ENCODE measurements at regions of chr14 and their contacts with region 1.

Region 1: DNA sequence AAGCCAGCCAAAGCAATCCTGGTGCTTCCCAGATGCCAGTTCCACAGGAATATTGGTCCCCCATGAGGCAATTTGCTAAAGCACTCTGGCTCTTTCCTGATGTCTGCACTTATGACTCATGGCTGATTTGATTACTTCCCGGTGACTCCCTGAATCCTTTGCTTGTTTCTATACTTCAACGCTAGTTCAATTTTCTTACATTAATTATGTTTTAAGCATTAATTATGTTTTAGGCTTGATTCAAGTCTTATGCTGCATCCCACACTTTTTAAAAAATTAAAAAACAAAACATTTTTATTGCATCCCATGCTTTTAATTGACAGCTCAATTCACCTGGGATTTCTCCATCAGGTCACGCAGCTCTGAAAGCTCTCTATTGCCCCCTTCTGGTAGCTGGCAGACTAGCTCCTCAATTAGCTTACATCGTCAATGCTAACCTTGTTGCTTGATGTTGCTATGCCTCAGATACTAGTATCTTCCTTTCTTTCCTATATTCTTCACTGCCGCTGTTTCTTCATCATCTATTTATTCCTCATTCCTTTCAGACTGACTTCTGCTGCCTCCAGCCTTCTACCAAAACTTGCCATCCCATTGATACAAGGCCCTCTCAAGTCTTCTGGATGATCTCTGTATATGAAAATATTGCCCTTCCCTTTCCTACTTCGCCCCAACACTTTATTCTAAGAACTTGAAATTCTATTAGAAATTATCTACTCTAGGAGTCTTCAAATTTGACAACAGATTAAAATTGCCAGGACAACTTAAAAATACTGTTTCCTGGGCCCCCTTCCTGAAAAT is 32.0 kb downstream of the TSHR start:
- DNase-seq: peak; percentile 51 to 77
- H3K4me3 ChIP-seq: no peak overlapping the region
- H3K27ac ChIP-seq: no peak overlapping the region
- H3K4me1 ChIP-seq: no peaks in the 10 kb centered on the region
- H3K27me3 ChIP-seq: no peaks in the 10 kb centered on the region
- CTCF ChIP-seq: peak; percentile 28 to 87 (median 80)
- EP300 ChIP-seq: no peak
- POLR2A ChIP-seq: no peak
- RAD21 ChIP-seq: peak; percentile 82 to 86

Region 2: GRCh38 chr14:80798878-80799277 is 188.6 kb before region 1 on chr14:
- CTCF ChIA-PET with region 1: no interaction called
- POLR2A ChIA-PET with region 1: no interaction called
- DNase-seq: no peak
- H3K4me3 ChIP-seq: no peak overlapping the region
- H3K27ac ChIP-seq: no peak overlapping the region
- H3K4me1 ChIP-seq: no peaks in the 10 kb centered on the region
- H3K27me3 ChIP-seq: no peaks in the 10 kb centered on the region
- CTCF ChIP-seq: no peak
- EP300 ChIP-seq: no peak
- POLR2A ChIP-seq: no peak
- RAD21 ChIP-seq: no peak

Region 3: GRCh38 chr14:80954687-80955299 is 32.6 kb before region 1 on chr14:
- CTCF ChIA-PET with region 1: interaction called, 64 read pairs
- POLR2A ChIA-PET with region 1: no interaction called
- DNase-seq: peak; percentile 38 to 89
- H3K4me3 ChIP-seq: peak overlapping the region; percentile 18 to 77 (median 64); a peak in 7 of 8 replicates
- H3K27ac ChIP-seq: no peak overlapping the region
- H3K4me1 ChIP-seq: peaks cover 0 to 6% (median under 1%) of the 10 kb centered on the region in 4 experiments; a peak in 2 of 7 replicates
- H3K27me3 ChIP-seq: peaks cover 2 to 9% (median 6%) of the 10 kb centered on the region in 4 experiments; a peak in 5 of 7 replicates
- CTCF ChIP-seq: peak; percentile 53 to 84 (median 69)
- EP300 ChIP-seq: no peak
- POLR2A ChIP-seq: no peak
- RAD21 ChIP-seq: peak; percentile 85 to 93

Region 4: DNA sequence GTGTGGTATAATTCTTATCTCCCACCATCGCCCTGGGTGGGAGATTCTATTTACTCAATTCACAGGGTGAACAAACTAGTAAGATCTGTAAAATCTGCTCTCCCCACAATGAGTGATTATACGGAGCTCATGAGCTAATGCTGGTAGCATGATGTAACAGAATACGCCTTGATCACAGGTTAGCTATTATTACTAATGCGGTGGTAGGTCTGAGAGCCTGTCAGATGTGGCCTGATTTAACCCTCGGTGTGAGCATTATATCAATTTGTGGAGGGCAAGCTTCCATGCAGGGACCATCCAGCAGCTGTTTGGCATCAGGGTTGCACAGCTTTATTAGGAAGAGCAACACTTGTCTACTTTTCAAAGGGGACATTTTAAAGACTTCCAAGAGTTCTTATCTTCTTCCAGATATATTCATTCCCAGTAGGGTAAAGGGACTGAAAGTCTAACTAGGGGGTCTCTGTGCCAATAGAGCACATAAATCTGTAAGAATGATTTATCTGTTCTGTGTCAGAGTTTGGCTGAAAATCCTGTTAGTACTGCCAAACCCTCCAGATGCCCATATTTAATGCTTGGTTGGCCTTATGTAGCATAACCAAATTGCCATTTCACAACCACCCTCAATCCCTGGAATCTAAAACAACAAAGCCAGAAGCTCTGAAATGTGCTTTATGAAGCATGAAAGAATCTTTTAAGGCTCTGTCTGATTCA is 13.3 kb before region 1 on chr14:
- CTCF ChIA-PET with region 1: interaction called, 104 read pairs
- POLR2A ChIA-PET with region 1: no interaction called
- DNase-seq: no peak
- H3K4me3 ChIP-seq: no peak overlapping the region
- H3K27ac ChIP-seq: no peak overlapping the region
- H3K4me1 ChIP-seq: no peaks in the 10 kb centered on the region
- H3K27me3 ChIP-seq: no peaks in the 10 kb centered on the region
- CTCF ChIP-seq: no peak
- EP300 ChIP-seq: no peak
- POLR2A ChIP-seq: no peak
- RAD21 ChIP-seq: no peak

Region 5: DNA sequence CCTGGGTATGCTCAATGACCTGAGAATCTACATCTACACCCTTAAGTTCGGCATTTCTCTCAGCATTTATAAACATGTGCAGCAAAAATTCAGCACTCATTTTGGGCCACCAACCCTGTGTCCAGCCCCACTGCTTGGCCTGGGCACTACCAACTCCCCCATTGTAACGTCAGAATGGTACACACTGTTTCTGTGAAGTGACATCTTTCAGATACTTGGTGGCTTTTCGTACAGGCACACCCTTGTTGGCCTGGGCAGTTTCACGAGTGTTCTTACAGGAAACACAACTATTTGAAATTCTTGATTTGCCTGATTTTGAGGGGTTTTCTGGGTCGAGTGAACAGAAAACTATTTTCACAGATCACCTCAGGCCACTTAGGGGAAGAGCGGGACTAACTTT is 14.0 kb after region 1 on chr14:
- CTCF ChIA-PET with region 1: interaction called, 32 read pairs
- POLR2A ChIA-PET with region 1: no interaction called
- DNase-seq: no peak
- H3K4me3 ChIP-seq: no peak overlapping the region
- H3K27ac ChIP-seq: no peak overlapping the region
- H3K4me1 ChIP-seq: no peaks in the 10 kb centered on the region
- H3K27me3 ChIP-seq: no peaks in the 10 kb centered on the region
- CTCF ChIP-seq: no peak
- EP300 ChIP-seq: no peak
- POLR2A ChIP-seq: no peak
- RAD21 ChIP-seq: no peak

Region 6: DNA sequence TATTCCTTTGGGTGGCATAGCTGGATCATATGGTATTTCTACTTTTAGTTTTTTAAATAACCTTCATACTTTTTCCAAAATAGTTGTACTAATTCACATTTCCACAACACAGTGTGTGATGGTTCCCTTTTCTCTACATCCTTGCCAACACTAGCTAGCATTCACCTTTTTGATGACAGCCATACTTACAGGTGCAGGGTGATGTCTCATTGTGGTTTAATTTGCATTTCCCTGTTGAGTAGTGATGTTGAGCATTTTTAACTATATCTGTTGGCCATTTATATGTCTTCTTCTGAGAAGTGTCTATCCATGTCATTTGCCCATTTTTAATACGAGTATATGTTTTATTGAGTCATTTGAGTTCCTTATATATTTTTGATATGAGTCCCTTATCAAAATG is 64.1 kb after region 1 on chr14:
- CTCF ChIA-PET with region 1: no interaction called
- POLR2A ChIA-PET with region 1: no interaction called
- DNase-seq: no peak
- H3K4me3 ChIP-seq: no peak overlapping the region
- H3K27ac ChIP-seq: no peak overlapping the region
- H3K4me1 ChIP-seq: no peaks in the 10 kb centered on the region
- H3K27me3 ChIP-seq: no peaks in the 10 kb centered on the region
- CTCF ChIP-seq: no peak
- EP300 ChIP-seq: no peak
- POLR2A ChIP-seq: no peak
- RAD21 ChIP-seq: no peak

Region 7: GRCh38 chr14:81070511-81070910 is 83.1 kb after region 1 on chr14:
- CTCF ChIA-PET with region 1: no interaction called
- POLR2A ChIA-PET with region 1: no interaction called
- DNase-seq: no peak
- H3K4me3 ChIP-seq: no peak overlapping the region
- H3K27ac ChIP-seq: no peak overlapping the region
- H3K4me1 ChIP-seq: no peaks in the 10 kb centered on the region
- H3K27me3 ChIP-seq: no peaks in the 10 kb centered on the region
- CTCF ChIP-seq: no peak
- EP300 ChIP-seq: no peak
- POLR2A ChIP-seq: no peak
- RAD21 ChIP-seq: no peak

Region 8: DNA sequence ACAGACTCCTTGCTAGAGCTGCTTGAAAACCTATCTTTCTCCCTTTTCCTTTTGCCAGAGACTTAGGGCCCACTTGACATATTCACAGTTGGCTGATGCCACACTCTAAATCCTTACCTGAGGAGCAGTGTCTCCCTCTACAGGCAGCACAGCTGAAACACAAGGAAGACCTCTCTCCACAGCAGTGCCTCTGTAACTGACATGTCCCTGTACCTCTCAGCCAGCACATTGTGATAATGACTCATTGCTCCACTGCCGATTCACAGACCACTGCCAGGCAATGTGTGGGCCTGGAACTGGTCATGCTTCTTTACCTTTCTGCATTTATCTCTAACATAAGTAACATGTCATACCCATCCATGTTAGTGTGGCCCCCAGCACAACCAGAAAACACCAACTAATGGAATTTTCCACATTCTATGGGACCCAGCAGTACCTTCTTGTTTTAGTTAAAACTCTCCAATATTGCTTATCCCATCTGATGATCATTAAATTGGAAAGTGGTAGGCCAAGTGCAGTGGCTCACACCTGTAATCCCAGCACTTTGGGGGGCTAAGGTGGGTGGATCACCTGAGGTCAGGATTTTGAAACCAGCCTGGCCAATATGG is 176.8 kb after region 1 on chr14:
- CTCF ChIA-PET with region 1: interaction called, 14 read pairs
- POLR2A ChIA-PET with region 1: no interaction called
- DNase-seq: peak; percentile 63 to 77
- H3K4me3 ChIP-seq: no peak overlapping the region
- H3K27ac ChIP-seq: no peak overlapping the region
- H3K4me1 ChIP-seq: peaks cover 0 to 2% (median 0%) of the 10 kb centered on the region in 4 experiments; a peak in 1 of 7 replicates
- H3K27me3 ChIP-seq: no peaks in the 10 kb centered on the region
- CTCF ChIP-seq: peak; percentile 71 to 99 (median 92)
- EP300 ChIP-seq: no peak
- POLR2A ChIP-seq: no peak
- RAD21 ChIP-seq: peak; percentile 88 to 92

Region 9: DNA sequence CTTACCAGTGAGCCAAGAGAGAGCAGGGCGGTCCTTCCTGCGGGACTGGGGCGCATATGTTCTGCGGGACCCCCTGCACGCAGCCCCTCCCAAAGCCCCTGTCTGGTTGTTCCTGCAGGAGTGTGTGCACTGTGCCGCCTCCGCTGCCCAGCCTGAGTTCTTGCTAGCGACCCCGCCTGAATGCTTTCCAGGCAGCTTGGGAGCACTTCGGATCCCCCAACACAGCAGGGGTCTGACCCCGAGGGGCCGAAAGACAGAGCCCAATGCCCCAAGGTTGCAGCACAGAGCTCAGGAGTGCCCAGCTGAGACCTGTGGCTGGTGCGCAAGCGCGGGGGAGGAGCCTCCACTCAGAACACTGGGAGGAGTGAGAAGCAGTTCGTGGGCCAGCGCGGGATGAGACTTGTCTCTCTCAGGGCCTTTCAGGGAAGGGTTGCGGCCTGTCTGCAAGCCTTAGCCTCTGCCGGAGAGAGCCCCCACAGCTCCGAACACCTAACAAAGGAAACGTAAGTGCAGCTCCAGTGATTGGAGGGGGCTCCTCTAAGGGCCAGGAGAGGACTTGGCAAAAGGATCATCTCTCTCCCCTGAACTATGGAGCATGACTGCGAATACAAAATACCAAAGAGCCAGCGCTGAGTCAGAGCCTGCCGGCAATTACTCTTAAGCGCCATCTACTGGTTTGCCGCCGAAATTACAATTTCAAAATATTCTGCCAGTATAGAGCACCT is 182.8 kb after region 1 on chr14:
- CTCF ChIA-PET with region 1: interaction called, 18 read pairs
- POLR2A ChIA-PET with region 1: no interaction called
- DNase-seq: peak; percentile 43 to 86
- H3K4me3 ChIP-seq: peak overlapping the region; percentile 49 to 85 (median 83)
- H3K27ac ChIP-seq: peak overlapping the region; percentile 85
- H3K4me1 ChIP-seq: peaks cover 0 to 5% (median 0%) of the 10 kb centered on the region in 4 experiments; a peak in 2 of 7 replicates
- H3K27me3 ChIP-seq: no peaks in the 10 kb centered on the region
- CTCF ChIP-seq: peak; percentile 51 to 83 (median 73)
- EP300 ChIP-seq: no peak
- POLR2A ChIP-seq: peak; percentile 54 to 90
- RAD21 ChIP-seq: peak; percentile 58 to 71

Measured in H1 (cell line).